Spleen (tissue), 13 donors: ENCODE measurements at regions of chr15 and their contacts with region 1.

Region 1: DNA sequence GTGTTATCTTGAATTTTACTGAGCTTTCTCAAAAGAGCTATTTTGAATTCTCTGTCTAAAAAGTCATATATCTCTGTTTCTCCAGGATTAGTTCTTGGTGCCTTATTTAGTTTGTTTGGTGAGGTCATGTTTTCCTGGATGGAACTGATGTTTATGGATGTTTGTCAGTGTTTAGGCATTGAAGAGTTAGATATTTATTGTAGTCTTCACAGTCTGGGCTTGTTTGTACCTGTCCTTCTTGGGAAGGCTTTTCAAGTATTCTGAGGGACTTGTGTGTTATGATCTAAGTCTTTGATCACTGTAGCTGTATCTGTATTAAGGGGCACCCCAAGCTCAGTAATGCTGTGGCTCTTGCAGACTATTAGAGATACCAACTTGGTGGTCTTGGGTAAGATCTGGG is 10.6 kb upstream of the RAD51 start:
- DNase-seq: no peak
- H3K4me3 ChIP-seq: no peak overlapping the region
- H3K27ac ChIP-seq: no peak overlapping the region
- H3K4me1 ChIP-seq: peaks cover 0 to 17% (median under 1%) of the 10 kb centered on the region in 6 donors
- H3K27me3 ChIP-seq: no peaks in the 10 kb centered on the region
- CTCF ChIP-seq: no peak
- POLR2A ChIP-seq: no peak

Region 2: GRCh38 chr15:40782580-40783227 is 98.3 kb after region 1 on chr15:
- intact Hi-C with region 1: loop called (anchors 2 kb)
- DNase-seq: peak; percentile 94
- H3K4me3 ChIP-seq: no peak overlapping the region
- H3K27ac ChIP-seq: no peak overlapping the region
- H3K4me1 ChIP-seq: peaks cover 0 to 30% (median 11%) of the 10 kb centered on the region in 6 donors
- H3K27me3 ChIP-seq: no peaks in the 10 kb centered on the region
- CTCF ChIP-seq: peak; percentile 56 to 89 (median 83)
- POLR2A ChIP-seq: no peak